Ovary (tissue), 10 donors: ENCODE measurements at regions of chr5 and their contacts with region 1.

Region 1: DNA sequence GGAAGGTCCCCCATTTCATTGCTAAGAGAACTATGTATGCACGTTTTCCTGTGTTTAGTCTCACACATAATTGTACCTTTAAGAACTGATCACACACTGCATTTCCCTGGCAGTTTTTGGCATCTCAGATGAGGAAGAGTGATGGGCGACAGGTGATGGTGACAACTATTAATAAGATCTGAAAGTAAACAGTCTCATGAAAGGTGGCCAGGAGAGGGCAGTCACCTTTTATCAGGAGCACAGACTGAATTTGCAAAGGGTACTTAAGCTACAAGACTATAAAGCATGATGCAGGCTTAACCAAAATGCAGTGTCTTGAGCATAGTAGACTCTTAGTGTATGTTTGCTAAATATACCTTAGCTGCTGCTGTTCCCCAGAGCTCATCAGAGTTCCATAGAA is 91.5 kb downstream of the GHR start:
- DNase-seq: no peak
- H3K4me3 ChIP-seq: no peak overlapping the region
- H3K27ac ChIP-seq: no peak overlapping the region
- H3K4me1 ChIP-seq: peaks cover 10% of the 10 kb centered on the region
- H3K27me3 ChIP-seq: no peaks in the 10 kb centered on the region
- CTCF ChIP-seq: no peak
- EP300 ChIP-seq: no peak
- POLR2A ChIP-seq: no peak

Region 2: GRCh38 chr5:42566652-42567295 is 52.0 kb after region 1 on chr5:
- intact Hi-C with region 1: loop called in 1 of 4 experiments (anchors 10 kb)
- DNase-seq: peak in 1 of 5 donors; percentile 30
- H3K4me3 ChIP-seq: no peak overlapping the region
- H3K27ac ChIP-seq: peak overlapping the region in 1 of 2 donors; percentile 56
- H3K4me1 ChIP-seq: peaks cover 7% of the 10 kb centered on the region
- H3K27me3 ChIP-seq: no peaks in the 10 kb centered on the region
- CTCF ChIP-seq: no peak
- EP300 ChIP-seq: no peak
- POLR2A ChIP-seq: no peak

Region 3: DNA sequence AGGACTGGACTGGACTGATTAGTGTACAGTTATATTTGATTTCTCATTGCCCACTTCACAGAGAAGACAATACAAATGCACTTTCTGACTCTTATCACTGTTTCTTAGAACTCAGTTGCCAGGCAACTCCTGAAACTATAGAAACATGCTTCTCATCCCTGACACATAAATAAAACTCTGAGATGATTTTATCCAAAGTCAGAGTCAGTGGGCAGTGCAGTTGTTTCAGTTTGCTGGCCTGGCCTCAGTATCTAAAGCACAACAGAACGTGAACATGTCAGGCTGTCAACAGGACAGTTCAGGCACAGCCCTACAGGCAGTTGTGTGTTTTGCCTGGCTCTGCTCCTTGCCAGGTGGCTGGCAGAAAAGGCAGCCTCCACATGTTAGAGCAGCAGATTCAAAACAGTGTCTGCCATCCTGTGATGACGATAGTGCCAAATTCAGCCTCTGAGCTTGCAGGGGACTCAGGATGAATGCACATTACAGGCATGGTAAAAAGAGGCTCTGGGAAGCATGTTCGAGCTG is 176.7 kb after region 1 on chr5:
- intact Hi-C with region 1: no loop called
- DNase-seq: peak in 1 of 5 donors; percentile 12
- H3K4me3 ChIP-seq: no peak overlapping the region
- H3K27ac ChIP-seq: no peak overlapping the region
- H3K4me1 ChIP-seq: peaks cover 3% of the 10 kb centered on the region
- H3K27me3 ChIP-seq: no peaks in the 10 kb centered on the region
- CTCF ChIP-seq: no peak
- EP300 ChIP-seq: no peak
- POLR2A ChIP-seq: no peak